BJ (cell line): ENCODE measurements at regions of chr17 and their contacts with region 1.

Region 1: GRCh38 chr17:81094509-81095382 is 59.8 kb downstream of the BAIAP2 start:
- DNase-seq: peak; percentile 100
- H3K4me3 ChIP-seq: no peak overlapping the region
- H3K27me3 ChIP-seq: no peaks in the 10 kb centered on the region
- CTCF ChIP-seq: peak; percentile 18; the same call in 1 of the 2 replicates

Region 2: GRCh38 chr17:80981062-80981902 is 113.5 kb before region 1 on chr17:
- CTCF ChIA-PET with region 1: interaction called, 13 read pairs
- POLR2A ChIA-PET with region 1: no interaction called
- DNase-seq: no peak
- H3K4me3 ChIP-seq: peak overlapping the region; percentile 20
- H3K27me3 ChIP-seq: no peaks in the 10 kb centered on the region
- CTCF ChIP-seq: peak; percentile 34

Region 3: GRCh38 chr17:80991645-80992076 is 103.1 kb before region 1 on chr17 and contains the start of gene CHMP6:
- CTCF ChIA-PET with region 1: interaction called, 54 read pairs
- POLR2A ChIA-PET with region 1: no interaction called
- DNase-seq: no peak
- H3K4me3 ChIP-seq: peak within 1 kb of the TSS; percentile 82
- H3K27me3 ChIP-seq: no peaks in the 10 kb centered on the region
- CTCF ChIP-seq: no peak
- polyA plus RNA-seq, gene CHMP6: 27.3 and 30.7 TPM in 2 replicates

Region 4: DNA sequence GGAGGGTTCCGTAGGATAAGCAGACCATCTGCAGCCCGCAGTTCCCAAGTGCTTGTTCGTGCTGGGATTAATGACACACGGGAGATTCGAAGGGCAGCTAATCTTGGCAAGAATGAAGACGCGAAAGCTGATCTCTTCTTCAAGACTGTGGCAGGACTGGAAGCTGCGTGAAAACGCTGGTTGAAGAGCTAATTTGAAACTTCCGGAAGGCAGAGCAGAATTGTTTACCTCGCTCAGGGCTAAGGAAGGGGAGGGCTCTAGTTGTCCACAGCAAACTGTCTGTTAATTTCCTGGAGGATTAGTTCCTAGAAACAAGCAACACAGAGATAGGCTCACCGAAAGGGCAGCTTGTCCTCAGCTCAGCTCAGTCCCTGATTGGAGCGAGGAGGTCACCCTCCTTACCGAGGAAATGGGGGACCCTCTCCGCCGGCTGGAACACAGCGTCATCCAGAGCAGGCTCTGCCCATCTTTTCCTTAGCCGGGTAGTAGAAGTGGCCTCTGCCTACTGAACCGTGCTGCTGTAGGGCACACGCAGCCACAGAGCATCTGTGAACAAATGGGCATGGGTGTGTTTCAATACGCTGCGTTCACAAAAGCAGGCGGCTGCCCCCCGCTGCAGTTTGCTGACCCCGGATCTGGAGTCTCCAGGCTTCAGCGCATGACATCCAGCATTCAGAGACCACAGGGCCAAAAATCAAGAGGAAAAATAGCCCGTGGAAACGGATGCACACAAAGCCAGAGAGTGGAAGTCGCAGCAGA is 76.5 kb before region 1 on chr17:
- CTCF ChIA-PET with region 1: interaction called, 176 read pairs
- POLR2A ChIA-PET with region 1: no interaction called
- DNase-seq: no peak
- H3K4me3 ChIP-seq: no peak overlapping the region
- H3K27me3 ChIP-seq: no peaks in the 10 kb centered on the region
- CTCF ChIP-seq: no peak

Region 5: GRCh38 chr17:81034779-81035388 is 59.9 kb before region 1 on chr17 and contains the start of gene BAIAP2:
- CTCF ChIA-PET with region 1: interaction called, 22 read pairs
- POLR2A ChIA-PET with region 1: interaction called, 16 read pairs
- DNase-seq: no peak
- H3K4me3 ChIP-seq: peak within 1 kb of the TSS; percentile 75
- H3K27me3 ChIP-seq: no peaks in the 10 kb centered on the region
- CTCF ChIP-seq: no peak
- polyA plus RNA-seq, gene BAIAP2: 7.8 and 12.1 TPM in 2 replicates

Region 6: DNA sequence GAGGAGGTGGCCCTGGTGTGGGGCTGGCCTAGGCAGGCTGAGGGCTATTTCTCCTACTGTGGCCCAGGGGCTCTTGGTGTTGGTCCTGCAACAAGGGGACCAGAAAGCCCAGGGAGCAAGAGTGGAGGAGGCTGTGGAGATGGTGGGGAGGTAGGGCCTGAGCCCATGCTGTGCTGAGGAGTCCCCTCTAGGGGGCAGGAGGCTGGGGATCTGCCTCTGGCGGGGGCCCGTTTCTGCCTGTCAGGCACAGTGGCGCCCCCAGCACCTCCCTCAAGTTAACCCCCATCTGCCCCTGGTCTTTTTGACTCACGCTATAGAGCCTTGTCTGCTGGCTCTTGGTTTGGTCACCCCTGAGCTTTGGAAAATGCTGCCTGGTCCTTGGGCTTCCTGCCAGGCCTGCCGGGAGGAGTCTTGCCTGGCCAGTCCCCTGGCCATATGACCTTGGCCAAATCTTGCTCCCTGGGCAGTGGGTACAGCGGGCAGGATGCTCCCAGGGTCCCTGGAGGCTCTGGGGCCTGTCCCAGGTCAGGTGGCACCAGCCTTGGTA is 53.9 kb before region 1 on chr17:
- CTCF ChIA-PET with region 1: interaction called, 22 read pairs
- POLR2A ChIA-PET with region 1: no interaction called
- DNase-seq: no peak
- H3K4me3 ChIP-seq: no peak overlapping the region
- H3K27me3 ChIP-seq: no peaks in the 10 kb centered on the region
- CTCF ChIP-seq: peak; percentile 58

Region 7: DNA sequence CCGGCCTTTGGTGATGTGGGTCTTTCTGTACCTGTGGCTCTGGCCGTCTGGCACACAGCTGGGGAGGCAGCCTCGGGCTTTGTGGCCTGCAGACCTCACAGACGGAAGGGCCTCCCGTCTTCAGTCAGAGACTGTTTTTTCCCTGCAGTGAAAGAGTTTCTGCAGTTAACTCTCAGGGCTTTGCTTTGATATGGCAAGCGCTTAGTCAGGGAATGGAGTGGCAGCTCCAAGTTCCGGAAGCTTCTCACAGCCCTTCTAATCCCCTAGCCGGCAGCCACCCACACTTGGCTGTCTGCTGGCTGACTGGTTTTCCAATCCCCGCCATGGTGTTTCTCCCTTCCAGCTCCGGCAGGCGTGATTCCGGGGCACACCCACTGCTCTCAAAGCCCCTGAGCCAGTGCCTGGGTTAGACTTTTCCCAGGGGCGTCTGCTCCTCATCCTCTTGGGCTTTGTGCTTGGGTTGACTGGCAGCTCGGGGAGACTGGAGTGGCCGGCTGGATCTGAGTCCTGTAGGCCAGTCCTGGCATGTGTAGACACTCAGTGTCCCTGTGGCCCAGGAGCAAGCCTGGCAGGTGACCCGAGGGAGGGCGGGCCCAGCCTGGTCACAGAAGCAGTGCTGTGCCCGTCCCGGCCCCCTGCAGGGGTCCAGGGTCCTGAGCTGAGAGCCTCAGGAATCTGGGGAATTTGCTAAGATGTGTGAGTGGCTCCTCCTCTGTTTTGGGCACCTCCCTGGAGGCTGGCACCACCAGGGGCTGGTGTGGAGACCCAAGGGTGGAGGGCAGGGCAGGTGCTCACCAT is 29.9 kb before region 1 on chr17:
- CTCF ChIA-PET with region 1: interaction called, 10 read pairs
- POLR2A ChIA-PET with region 1: no interaction called
- DNase-seq: no peak
- H3K4me3 ChIP-seq: no peak overlapping the region
- H3K27me3 ChIP-seq: no peaks in the 10 kb centered on the region
- CTCF ChIP-seq: no peak